GM12878 (cell line): ENCODE measurements at regions of chr11 and their contacts with region 1.

Region 1: DNA sequence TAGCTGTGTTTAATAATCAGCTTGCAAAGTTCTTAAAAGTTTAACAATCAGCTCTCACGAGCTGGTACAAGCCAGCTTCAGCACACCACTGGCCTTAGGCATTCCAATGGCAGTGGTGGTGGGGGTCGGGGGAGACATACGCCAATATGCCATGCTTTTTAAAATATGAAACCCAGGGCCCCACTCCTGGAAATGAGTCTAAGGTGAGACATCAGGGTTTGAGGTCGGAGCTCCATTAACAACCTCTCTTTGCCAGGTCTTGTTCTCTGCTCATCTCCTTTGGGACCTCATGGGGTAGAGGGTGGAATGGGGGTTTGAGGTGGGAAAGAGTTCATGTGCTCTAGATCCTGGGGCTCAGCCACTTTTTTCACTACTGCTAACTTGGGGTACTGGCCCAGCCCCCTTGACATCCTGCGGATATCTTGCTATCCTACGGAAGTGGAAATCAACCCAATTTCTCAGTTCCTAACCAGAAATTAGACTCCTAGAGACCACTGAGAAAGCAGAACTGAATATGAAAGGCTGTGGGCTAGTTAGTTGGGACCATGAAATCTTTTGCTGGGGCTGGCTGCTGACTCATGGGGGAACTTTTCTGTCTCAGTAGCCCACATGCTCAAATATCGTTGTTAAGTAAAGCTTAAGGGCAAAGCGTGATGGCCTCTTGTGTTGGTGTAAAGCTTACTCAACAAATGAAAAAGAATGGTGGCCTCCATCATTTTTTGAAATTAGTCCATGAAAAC is 90.1 kb downstream of the PDHX start:
- DNase-seq: peak; percentile 95
- ATAC-seq: peak; percentile 96
- H3K4me3 ChIP-seq: no peak overlapping the region
- H3K27ac ChIP-seq: peak overlapping the region; percentile 51
- H3K4me1 ChIP-seq: peaks cover 18% of the 10 kb centered on the region
- H3K27me3 ChIP-seq: no peaks in the 10 kb centered on the region
- CTCF ChIP-seq: no peak
- EP300 ChIP-seq: peak; percentile 83 to 94; a peak in 3 of 4 replicates
- POLR2A ChIP-seq: no peak
- RAD21 ChIP-seq: no peak; the same call in 1 of the 2 replicates

Region 2: GRCh38 chr11:34243726-34244464 is 762.7 kb before region 1 on chr11:
- CTCF ChIA-PET with region 1: no interaction called
- POLR2A ChIA-PET with region 1: no interaction called
- RAD21 ChIA-PET with region 1: no interaction called
- SMC1A ChIA-PET with region 1: no interaction called
- in situ Hi-C with region 1: loop called (anchors 10 kb)
- intact Hi-C with region 1: no loop called
- DNase-seq: peak; percentile 86
- ATAC-seq: peak; percentile 80
- H3K4me3 ChIP-seq: no peak overlapping the region
- H3K27ac ChIP-seq: peak overlapping the region; percentile 84
- H3K4me1 ChIP-seq: peaks cover 82% of the 10 kb centered on the region
- H3K27me3 ChIP-seq: no peaks in the 10 kb centered on the region
- CTCF ChIP-seq: no peak
- EP300 ChIP-seq: peak; percentile 74 to 87
- POLR2A ChIP-seq: no peak
- RAD21 ChIP-seq: peak; percentile 29; the same call in 1 of the 2 replicates

Region 3: DNA sequence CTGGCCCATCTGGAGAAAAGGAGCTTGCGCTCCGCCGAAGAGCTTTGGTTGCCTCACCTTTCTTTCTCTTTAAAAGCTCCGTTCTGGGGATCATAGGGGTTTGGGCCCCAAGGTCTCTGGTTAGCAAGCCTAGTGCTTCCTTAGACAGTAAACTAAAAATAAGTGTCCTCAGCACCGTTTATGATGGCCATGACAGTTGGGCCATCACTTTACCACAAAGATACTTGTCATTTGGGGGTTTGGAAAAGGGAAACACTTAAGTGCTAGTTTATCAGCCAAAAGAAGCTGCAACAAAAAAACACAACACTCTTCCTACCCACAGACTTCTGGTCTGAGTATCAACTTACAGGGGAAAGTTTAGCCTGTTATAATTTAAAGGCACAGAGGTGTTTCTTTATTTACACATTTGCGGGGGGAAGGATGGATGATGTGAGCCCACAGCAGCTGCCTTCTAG is 44.0 kb after region 1 on chr11:
- CTCF ChIA-PET with region 1: no interaction called
- POLR2A ChIA-PET with region 1: no interaction called
- RAD21 ChIA-PET with region 1: no interaction called
- SMC1A ChIA-PET with region 1: interaction called, 12 read pairs
- in situ Hi-C with region 1: no loop called
- intact Hi-C with region 1: no loop called
- DNase-seq: no peak
- ATAC-seq: peak; percentile 18; the same call in 2 of the 3 replicates
- H3K4me3 ChIP-seq: no peak overlapping the region
- H3K27ac ChIP-seq: peak overlapping the region; percentile 61
- H3K4me1 ChIP-seq: peaks cover 14% of the 10 kb centered on the region
- H3K27me3 ChIP-seq: no peaks in the 10 kb centered on the region
- CTCF ChIP-seq: no peak
- EP300 ChIP-seq: no peak
- POLR2A ChIP-seq: no peak
- RAD21 ChIP-seq: no peak

Region 4: DNA sequence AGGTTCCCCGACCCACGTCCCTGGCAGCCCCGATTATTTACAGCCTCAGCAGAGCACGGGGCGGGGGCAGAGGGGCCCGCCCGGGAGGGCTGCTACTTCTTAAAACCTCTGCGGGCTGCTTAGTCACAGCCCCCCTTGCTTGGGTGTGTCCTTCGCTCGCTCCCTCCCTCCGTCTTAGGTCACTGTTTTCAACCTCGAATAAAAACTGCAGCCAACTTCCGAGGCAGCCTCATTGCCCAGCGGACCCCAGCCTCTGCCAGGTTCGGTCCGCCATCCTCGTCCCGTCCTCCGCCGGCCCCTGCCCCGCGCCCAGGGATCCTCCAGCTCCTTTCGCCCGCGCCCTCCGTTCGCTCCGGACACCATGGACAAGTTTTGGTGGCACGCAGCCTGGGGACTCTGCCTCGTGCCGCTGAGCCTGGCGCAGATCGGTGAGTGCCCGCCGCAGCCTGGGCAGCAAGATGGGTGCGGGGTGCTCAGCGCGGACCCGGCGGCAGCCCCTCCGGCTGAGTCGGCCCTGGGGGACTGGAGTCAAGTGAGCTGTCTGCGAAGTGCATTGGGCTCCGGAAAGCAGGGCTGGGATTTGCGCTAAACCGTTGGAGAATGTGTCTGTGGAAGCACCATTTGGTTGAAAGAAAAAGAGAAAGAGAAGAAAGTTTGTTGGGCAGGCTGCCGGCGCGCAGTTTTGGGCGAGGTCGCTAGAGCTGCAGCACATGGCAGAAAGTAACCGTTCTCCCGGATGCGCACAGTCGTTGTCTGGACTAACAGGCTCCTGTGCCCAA is 132.6 kb after region 1 on chr11 and contains the start of gene CD44:
- CTCF ChIA-PET with region 1: interaction called, 5 read pairs
- POLR2A ChIA-PET with region 1: interaction called, 5 read pairs
- RAD21 ChIA-PET with region 1: interaction called, 7 read pairs
- SMC1A ChIA-PET with region 1: interaction called, 47 read pairs
- in situ Hi-C with region 1: loop called (anchors 5 kb)
- intact Hi-C with region 1: loop called (anchors 2 kb)
- DNase-seq: no peak
- ATAC-seq: peak; percentile 54
- H3K4me3 ChIP-seq: peak within 1 kb of the TSS; percentile 88
- H3K27ac ChIP-seq: peak within 1 kb of the TSS; percentile 68
- H3K4me1 ChIP-seq: peaks cover 34% of the 10 kb centered on the region
- H3K27me3 ChIP-seq: no peaks in the 10 kb centered on the region
- CTCF ChIP-seq: no peak
- EP300 ChIP-seq: no peak
- POLR2A ChIP-seq: peak; percentile 99
- RAD21 ChIP-seq: no peak
- polyA plus RNA-seq, gene CD44: 57.1 to 65.3 TPM

Region 5: DNA sequence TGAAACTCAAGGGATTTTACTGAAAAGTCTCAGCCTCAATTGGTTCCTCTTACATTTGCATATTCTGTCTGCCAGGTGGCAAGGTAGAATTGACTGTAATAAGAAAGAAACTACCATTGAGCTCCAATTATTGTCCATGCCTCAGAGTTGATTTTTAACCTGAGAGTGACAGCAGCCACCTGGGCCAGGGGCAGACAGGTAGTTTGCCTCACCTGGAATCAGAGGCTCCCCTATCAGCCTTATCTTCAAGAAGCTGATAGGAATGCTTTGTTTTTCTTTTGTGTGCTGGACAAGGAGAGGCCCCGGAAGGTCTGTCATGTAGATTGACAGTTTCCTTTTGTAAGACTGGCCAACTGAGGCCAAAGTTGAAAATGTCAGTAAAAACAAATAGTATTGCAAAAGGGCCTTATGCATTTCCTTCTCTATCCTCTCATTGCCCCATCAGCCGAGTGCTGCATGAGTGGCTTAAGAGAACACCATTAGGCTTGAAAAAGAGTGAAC is 166.5 kb after region 1 on chr11:
- CTCF ChIA-PET with region 1: no interaction called
- POLR2A ChIA-PET with region 1: no interaction called
- RAD21 ChIA-PET with region 1: interaction called, 12 read pairs
- SMC1A ChIA-PET with region 1: interaction called, 234 read pairs
- in situ Hi-C with region 1: no loop called
- intact Hi-C with region 1: no loop called
- DNase-seq: peak; percentile 35
- ATAC-seq: peak; percentile 74
- H3K4me3 ChIP-seq: no peak overlapping the region
- H3K27ac ChIP-seq: peak overlapping the region; percentile 38
- H3K4me1 ChIP-seq: peaks cover 32% of the 10 kb centered on the region
- H3K27me3 ChIP-seq: no peaks in the 10 kb centered on the region
- CTCF ChIP-seq: no peak
- EP300 ChIP-seq: peak in 1 of 2 experiments; percentile 37; a peak in 1 of 4 replicates
- POLR2A ChIP-seq: no peak
- RAD21 ChIP-seq: no peak

Region 6: DNA sequence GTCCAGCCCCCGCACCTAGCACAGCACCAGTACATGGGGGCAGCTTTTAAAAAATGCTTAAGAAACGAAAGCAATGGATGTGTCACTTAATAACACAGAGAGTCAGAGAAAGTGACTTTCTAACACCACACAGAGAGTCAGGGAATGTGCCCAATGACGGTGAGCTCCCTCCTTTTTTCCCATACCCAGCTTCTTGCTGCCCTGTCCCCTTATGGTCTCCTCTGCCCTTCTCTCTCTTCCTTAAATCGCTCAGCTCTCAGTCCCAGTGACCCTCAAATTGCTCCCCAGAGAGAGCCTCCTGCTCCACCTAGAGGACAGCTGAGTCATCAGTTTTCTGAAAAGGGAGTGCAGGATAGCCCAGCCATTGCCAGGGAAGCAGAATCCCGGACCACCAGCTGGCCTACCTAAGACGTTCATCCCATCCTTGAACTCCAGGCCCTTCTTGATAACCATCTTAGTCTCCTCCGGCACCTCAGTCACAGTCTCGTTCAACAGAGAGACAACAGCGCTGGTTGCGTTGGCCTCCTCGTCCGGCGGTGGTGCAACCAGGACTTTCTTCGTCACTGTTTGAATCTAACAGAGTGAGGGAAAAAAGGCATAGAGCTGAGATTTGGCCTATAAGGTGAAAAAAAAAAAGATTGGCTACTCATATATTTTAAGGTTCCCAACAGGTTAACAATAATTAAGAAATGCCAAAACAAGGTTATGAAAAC is 299.3 kb after region 1 on chr11:
- CTCF ChIA-PET with region 1: interaction called, 12 read pairs
- POLR2A ChIA-PET with region 1: no interaction called
- RAD21 ChIA-PET with region 1: interaction called, 21 read pairs
- SMC1A ChIA-PET with region 1: interaction called, 36 read pairs
- in situ Hi-C with region 1: no loop called
- intact Hi-C with region 1: no loop called
- DNase-seq: no peak
- ATAC-seq: peak; percentile 90
- H3K4me3 ChIP-seq: no peak overlapping the region
- H3K27ac ChIP-seq: no peak overlapping the region
- H3K4me1 ChIP-seq: peaks cover 19% of the 10 kb centered on the region
- H3K27me3 ChIP-seq: no peaks in the 10 kb centered on the region
- CTCF ChIP-seq: peak; percentile 68 to 76 (median 71)
- EP300 ChIP-seq: 0 out of 4 replicates have a peak, but pooled peaks of 1 of the 2 experiments have one; percentile 27
- POLR2A ChIP-seq: no peak
- RAD21 ChIP-seq: peak; percentile 93